WTC11 (cell line): ENCODE measurements at regions of chr1 and their contacts with region 1.

Region 1: GRCh38 chr1:31745096-31745945 is 18.8 kb downstream of the ADGRB2 start:
- DNase-seq: peak; percentile 82
- ATAC-seq: peak; percentile 82
- H3K4me3 Mint-ChIP-seq: no peak overlapping the region
- H3K27ac Mint-ChIP-seq: no peak overlapping the region
- H3K4me1 Mint-ChIP-seq: peaks cover 37% of the 10 kb centered on the region
- H3K27me3 Mint-ChIP-seq: no peaks in the 10 kb centered on the region; the same call in 1 of the 2 replicates
- CTCF ChIP-seq: peak; percentile 71

Region 2: DNA sequence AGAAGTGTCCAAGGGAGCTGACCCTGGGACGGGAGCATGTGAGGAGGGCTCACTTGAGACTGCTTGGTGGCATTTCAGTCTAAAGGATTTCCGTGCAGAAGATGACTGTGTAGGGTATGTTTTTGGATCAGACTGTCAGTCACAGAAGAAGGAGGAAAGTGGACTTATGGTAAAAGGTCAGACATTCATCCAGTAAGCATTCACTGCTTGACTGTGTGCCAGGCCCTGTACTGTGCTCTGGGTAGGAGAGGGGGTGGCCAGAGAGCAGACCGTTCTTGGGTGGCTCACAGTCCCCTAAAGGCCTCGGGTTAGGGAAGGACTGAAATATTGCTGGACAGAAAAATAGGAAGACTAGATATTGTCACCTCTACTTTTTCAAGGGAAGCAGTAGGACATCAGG is 334.4 kb before region 1 on chr1:
- CTCF ChIA-PET with region 1: no interaction called
- POLR2A ChIA-PET with region 1: no interaction called
- DNase-seq: no peak
- ATAC-seq: no peak
- H3K4me3 Mint-ChIP-seq: no peak overlapping the region
- H3K27ac Mint-ChIP-seq: no peak overlapping the region
- H3K4me1 Mint-ChIP-seq: peaks cover 25% of the 10 kb centered on the region
- H3K27me3 Mint-ChIP-seq: peaks cover 16% of the 10 kb centered on the region
- CTCF ChIP-seq: no peak

Region 3: GRCh38 chr1:31644560-31645273 is 100.6 kb before region 1 on chr1 and contains the start of gene PEF1:
- CTCF ChIA-PET with region 1: interaction called, 11 read pairs
- POLR2A ChIA-PET with region 1: no interaction called
- DNase-seq: peak; percentile 99
- ATAC-seq: peak; percentile 80
- H3K4me3 Mint-ChIP-seq: peak within 1 kb of the TSS; percentile 94
- H3K27ac Mint-ChIP-seq: peak within 1 kb of the TSS; percentile 100
- H3K4me1 Mint-ChIP-seq: peaks cover 19% of the 10 kb centered on the region
- H3K27me3 Mint-ChIP-seq: no peaks in the 10 kb centered on the region; the same call in 1 of the 2 replicates
- CTCF ChIP-seq: no peak
- total RNA-seq, gene PEF1: 33.7 to 37.0 TPM (median 35.5 TPM) in 3 replicates

Region 4: GRCh38 chr1:31663622-31664452 is 81.5 kb before region 1 on chr1:
- CTCF ChIA-PET with region 1: interaction called, 61 read pairs
- POLR2A ChIA-PET with region 1: interaction called, 3 read pairs
- DNase-seq: peak; percentile 89
- ATAC-seq: peak; percentile 83
- H3K4me3 Mint-ChIP-seq: no peak overlapping the region
- H3K27ac Mint-ChIP-seq: no peak overlapping the region
- H3K4me1 Mint-ChIP-seq: peaks cover 3% of the 10 kb centered on the region
- H3K27me3 Mint-ChIP-seq: no peaks in the 10 kb centered on the region
- CTCF ChIP-seq: peak; percentile 91

Region 5: DNA sequence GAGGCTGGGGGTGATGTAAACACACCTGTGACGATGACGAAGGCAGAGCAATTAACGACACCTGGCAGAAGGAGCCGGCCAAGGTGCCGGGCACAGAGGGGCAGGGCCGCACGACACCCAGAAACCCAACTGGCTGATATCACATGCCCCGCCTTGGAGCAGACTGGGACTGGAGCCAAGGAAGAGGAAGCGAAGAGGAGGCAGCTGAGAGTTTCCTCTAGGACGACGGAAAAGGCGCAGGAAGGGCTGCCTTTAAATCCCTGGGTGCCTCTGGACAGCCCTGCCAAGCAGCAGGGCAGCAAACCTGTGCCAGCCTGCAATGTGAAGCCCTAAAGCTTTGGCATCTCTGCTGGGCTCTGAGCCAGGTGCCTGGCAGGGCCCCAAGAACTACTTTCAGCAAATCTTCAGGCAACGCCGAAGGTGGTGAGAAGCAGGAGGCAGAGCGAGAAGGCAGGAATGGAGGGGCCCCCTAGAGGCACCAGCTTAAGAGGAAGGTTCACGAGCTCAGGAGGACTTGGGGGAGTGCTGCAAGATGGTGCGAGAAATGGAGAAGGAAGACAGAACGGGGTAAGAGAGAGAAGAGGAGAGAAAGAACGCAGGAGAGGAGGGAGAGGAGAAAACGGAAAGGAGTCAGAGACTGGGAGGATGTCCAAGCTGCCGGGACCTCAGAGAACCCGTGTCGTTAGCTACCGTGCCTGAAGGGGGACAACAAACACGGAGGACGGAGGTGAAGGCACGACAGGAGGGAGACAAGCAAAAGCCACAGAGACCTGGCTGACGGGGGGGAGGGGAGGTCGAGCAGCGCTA is 75.3 kb before region 1 on chr1:
- CTCF ChIA-PET with region 1: interaction called, 61 read pairs
- POLR2A ChIA-PET with region 1: no interaction called
- DNase-seq: no peak
- ATAC-seq: peak; percentile 59
- H3K4me3 Mint-ChIP-seq: peak overlapping the region; percentile 18; the same call in 1 of the 2 replicates
- H3K27ac Mint-ChIP-seq: 0 out of 2 replicates have a peak overlapping the region, but pooled peaks have one; percentile 16
- H3K4me1 Mint-ChIP-seq: peaks cover 19% of the 10 kb centered on the region
- H3K27me3 Mint-ChIP-seq: no peaks in the 10 kb centered on the region
- CTCF ChIP-seq: no peak

Region 6: DNA sequence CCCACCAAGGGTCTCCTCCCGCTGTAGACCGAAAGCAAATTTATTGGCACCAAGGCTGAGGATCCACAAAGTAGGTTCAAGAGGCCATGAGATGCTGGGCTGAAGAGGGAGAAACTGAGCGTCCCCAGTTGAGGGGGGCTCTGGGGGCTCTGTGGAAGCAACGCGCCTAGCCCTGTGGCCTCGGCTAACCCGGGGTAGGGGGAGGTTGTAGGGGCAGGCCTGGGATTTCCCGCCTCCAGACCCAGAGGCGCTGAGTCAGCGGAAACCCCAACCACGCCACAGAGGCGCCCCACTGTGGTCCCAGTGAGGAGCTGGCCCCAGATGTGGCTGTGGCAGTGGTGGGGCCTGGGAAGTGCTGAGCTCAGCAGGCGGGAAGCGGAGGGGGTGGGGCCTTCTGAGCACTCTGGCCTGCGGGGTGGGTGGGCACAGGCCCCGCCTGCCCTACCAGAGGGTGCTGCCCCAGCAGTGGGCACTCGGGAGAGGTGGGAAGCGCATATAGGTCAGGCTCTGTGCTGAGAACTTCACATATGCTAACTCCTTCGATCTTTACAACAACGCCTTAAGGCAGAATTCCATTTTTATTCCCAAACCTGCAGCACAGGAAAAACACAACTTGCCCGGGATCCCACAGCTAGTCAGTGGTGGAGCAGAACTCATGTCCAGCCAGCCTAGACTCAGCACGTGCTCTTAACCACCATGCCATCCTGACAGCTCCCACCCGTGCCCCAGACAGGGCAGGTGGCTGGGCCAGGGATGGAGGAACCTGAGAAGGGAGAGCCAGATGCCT is 40.0 kb before region 1 on chr1:
- CTCF ChIA-PET with region 1: interaction called, 36 read pairs
- POLR2A ChIA-PET with region 1: no interaction called
- DNase-seq: peak; percentile 75
- ATAC-seq: peak; percentile 40
- H3K4me3 Mint-ChIP-seq: peak overlapping the region; percentile 76
- H3K27ac Mint-ChIP-seq: peak overlapping the region; percentile 91
- H3K4me1 Mint-ChIP-seq: peaks cover 42% of the 10 kb centered on the region
- H3K27me3 Mint-ChIP-seq: peaks cover 6% of the 10 kb centered on the region
- CTCF ChIP-seq: no peak

Region 7: DNA sequence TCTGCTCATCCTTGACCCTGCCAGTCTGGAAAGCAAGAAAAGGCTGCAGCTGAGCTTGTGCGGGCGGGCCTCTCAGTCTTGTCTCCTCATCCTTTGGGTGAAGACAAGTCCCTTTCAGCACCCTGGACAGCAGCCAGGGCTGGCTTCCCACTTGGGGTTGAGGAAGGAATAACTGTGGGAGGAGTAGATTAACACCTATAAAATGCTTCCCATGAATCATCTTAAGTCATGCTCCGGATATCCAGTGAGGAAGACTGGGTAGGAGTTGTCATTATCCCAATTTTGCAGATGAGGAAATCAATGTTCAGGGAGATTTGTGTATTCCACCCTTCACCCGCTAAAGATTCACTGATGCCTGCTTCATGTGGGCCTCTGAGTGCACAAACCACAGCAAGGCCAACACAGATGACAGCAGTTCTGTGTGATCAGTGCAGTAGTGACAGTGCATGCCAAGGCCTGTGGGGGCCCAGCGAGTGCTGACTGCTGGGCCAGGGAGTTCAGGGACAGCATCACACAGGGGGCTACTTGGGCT is 21.4 kb before region 1 on chr1:
- CTCF ChIA-PET with region 1: interaction called, 24 read pairs
- POLR2A ChIA-PET with region 1: no interaction called
- DNase-seq: peak; percentile 94
- ATAC-seq: peak; percentile 49
- H3K4me3 Mint-ChIP-seq: no peak overlapping the region
- H3K27ac Mint-ChIP-seq: no peak overlapping the region
- H3K4me1 Mint-ChIP-seq: peaks cover 16% of the 10 kb centered on the region
- H3K27me3 Mint-ChIP-seq: no peaks in the 10 kb centered on the region; the same call in none of the 2 replicates
- CTCF ChIP-seq: no peak

Region 8: DNA sequence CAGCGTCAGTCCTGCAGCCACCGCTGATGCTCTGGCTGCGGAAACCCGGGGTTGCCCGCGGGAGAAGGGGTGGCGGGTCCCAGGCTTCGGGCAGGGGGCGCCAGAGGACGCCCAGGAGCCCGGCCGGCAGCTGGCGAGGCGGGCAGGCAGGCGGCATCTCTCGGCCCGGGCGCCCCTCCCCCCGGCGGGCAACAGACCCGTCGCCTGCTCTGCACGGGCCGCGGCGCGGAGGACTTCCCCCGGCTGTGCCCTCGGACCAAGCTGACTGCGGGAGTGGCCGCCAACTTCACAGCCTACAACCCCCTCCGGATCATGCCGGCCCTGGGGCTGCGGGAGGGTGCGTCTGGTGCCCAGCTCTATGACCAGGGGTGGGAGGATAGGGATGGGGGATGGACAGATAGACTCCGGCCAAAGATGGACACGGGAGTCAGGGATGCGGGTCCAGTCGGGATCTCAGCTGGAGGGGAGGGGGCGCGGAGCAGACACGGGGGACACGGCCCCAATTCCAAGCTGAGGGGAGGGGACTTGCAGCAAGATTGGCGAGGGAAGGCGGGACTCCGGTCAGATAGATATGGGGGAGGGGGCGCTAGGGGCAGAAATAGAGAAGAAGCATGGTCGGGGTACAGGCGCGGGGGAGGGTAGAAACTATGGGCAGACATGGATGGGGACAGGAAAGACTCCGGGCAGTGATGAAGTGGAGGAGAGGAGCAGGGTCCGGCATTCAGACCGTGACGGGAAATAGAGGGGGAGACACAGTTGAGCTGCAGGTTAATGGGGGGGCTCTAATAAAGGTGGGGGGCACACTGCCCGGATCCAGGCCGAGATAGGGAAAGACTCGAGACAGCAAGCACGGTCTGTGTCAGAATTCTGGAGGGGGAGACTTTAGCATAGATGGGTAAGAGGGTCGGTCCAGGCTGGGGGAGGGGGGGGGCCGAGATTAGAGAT is 17.7 kb after region 1 on chr1:
- CTCF ChIA-PET with region 1: interaction called, 58 read pairs
- POLR2A ChIA-PET with region 1: interaction called, 4 read pairs
- DNase-seq: peak; percentile 88
- ATAC-seq: peak; percentile 36
- H3K4me3 Mint-ChIP-seq: peak overlapping the region; percentile 82
- H3K27ac Mint-ChIP-seq: no peak overlapping the region
- H3K4me1 Mint-ChIP-seq: peaks cover 63% of the 10 kb centered on the region
- H3K27me3 Mint-ChIP-seq: peaks cover 20% of the 10 kb centered on the region
- CTCF ChIP-seq: peak; percentile 82

Region 9: GRCh38 chr1:31944205-31945089 is 199.1 kb after region 1 on chr1:
- CTCF ChIA-PET with region 1: no interaction called
- POLR2A ChIA-PET with region 1: no interaction called
- DNase-seq: peak; percentile 96
- ATAC-seq: peak; percentile 95
- H3K4me3 Mint-ChIP-seq: peak overlapping the region; percentile 76
- H3K27ac Mint-ChIP-seq: peak overlapping the region; percentile 97
- H3K4me1 Mint-ChIP-seq: peaks cover 27% of the 10 kb centered on the region
- H3K27me3 Mint-ChIP-seq: peaks cover 5% of the 10 kb centered on the region
- CTCF ChIP-seq: no peak